ENCODE measurements at regions of chr16 and their contacts with region 1.

Region 1: GRCh38 chr16:19907161-19907992 is 22.7 kb upstream of the GPRC5B start:
- DNase-seq: peak; percentile 76 to 93
- H3K4me3 ChIP-seq: no peak overlapping the region
- H3K27ac ChIP-seq: no peak overlapping the region
- H3K4me1 ChIP-seq: peaks cover 0 to 3% (median 1%) of the 10 kb centered on the region in 4 experiments; a peak in 1 of 7 replicates
- H3K27me3 ChIP-seq: no peaks in the 10 kb centered on the region
- CTCF ChIP-seq: peak; percentile 96 to 99 (median 98)
- EP300 ChIP-seq: 0 out of 3 replicates have a peak, but pooled peaks of 1 of the 2 experiments have one; percentile 25
- POLR2A ChIP-seq: no peak
- RAD21 ChIP-seq: peak; percentile 99 to 100

Region 2: DNA sequence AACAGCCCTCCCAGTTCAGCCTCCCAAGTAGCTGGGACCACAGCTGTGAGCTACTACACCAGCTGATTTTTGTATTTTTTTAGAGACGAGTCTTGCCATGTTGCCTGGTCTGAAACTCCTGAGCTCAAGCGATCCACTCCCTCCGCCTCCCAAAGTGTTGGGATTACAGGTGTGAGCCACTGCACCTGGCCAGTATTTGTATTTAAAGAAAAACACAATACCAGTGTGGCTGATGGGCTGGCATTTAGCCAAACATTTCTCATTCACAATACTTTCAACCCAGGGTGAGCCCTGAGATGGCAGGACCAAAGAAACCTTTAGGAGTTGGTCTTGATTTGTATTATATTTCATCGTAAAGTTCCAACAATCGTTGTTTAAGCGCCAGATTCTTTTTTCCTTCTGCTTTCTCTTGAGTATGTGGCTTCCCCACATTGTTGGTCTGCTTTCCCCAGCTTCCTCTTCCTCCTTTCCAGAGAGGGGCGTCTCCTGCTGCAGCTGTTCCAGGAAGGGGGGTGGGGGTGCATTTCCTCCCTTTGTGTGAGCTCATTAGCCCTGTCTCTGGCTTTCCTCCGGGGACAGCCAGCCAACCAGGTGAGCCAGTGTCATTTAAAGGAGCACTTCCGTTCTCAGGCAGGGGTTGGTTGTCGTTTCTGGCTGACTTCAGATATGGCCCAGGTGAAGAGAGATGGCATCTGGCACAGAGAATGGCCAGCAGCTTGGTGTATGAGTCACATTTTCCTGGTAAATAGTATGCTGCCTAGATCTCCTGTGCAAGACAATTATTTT is 102.6 kb before region 1 on chr16:
- CTCF ChIA-PET with region 1: no interaction called
- POLR2A ChIA-PET with region 1: no interaction called
- DNase-seq: peak; percentile 38 to 55
- H3K4me3 ChIP-seq: no peak overlapping the region
- H3K27ac ChIP-seq: peak overlapping the region; percentile 44; the same call in 1 of the 2 replicates
- H3K4me1 ChIP-seq: peaks cover 0 to 5% (median 1%) of the 10 kb centered on the region in 4 experiments; a peak in 4 of 7 replicates
- H3K27me3 ChIP-seq: no peaks in the 10 kb centered on the region
- CTCF ChIP-seq: no peak
- EP300 ChIP-seq: no peak
- POLR2A ChIP-seq: no peak
- RAD21 ChIP-seq: no peak; a peak in 1 of 4 replicates

Region 3: DNA sequence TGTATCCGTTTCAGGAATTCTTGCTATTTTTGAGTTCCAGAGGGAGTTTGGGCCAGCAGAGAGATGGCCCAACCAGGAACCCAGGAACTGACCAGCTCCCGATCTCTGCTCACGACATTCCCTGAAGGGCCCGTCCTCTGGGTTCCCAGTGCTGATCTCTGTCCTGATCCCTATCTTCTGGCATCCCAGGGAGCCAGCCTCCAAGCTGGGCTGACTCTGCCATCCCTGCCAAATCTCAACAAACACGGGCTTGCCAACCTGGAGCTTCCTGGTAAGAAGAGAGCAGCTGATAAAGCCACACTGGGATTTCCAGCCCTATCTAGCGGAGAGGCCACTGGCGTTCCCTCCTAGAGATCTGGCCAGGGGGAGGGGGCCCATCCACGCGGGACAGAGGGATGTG is 39.0 kb before region 1 on chr16:
- CTCF ChIA-PET with region 1: no interaction called
- POLR2A ChIA-PET with region 1: no interaction called
- DNase-seq: no peak
- H3K4me3 ChIP-seq: no peak overlapping the region
- H3K27ac ChIP-seq: no peak overlapping the region
- H3K4me1 ChIP-seq: peaks cover 0 to 4% (median 0%) of the 10 kb centered on the region in 4 experiments; a peak in 1 of 7 replicates
- H3K27me3 ChIP-seq: no peaks in the 10 kb centered on the region
- CTCF ChIP-seq: no peak
- EP300 ChIP-seq: no peak
- POLR2A ChIP-seq: no peak
- RAD21 ChIP-seq: no peak

Region 4: GRCh38 chr16:19980632-19981265 is 73.4 kb after region 1 on chr16:
- CTCF ChIA-PET with region 1: interaction called, 18 read pairs
- POLR2A ChIA-PET with region 1: no interaction called
- DNase-seq: peak in 1 of 2 experiments; percentile 56
- H3K4me3 ChIP-seq: no peak overlapping the region
- H3K27ac ChIP-seq: no peak overlapping the region
- H3K4me1 ChIP-seq: peaks cover 0 to 4% (median 0%) of the 10 kb centered on the region in 4 experiments; a peak in 3 of 7 replicates
- H3K27me3 ChIP-seq: no peaks in the 10 kb centered on the region
- CTCF ChIP-seq: peak; percentile 68 to 77 (median 75)
- EP300 ChIP-seq: no peak
- POLR2A ChIP-seq: no peak
- RAD21 ChIP-seq: peak; percentile 55 to 71

Region 5: GRCh38 chr16:20064931-20065330 is 157.6 kb after region 1 on chr16:
- CTCF ChIA-PET with region 1: interaction called, 11 read pairs
- POLR2A ChIA-PET with region 1: interaction called, 3 read pairs
- DNase-seq: no peak
- H3K4me3 ChIP-seq: no peak overlapping the region
- H3K27ac ChIP-seq: no peak overlapping the region
- H3K4me1 ChIP-seq: no peaks in the 10 kb centered on the region
- H3K27me3 ChIP-seq: no peaks in the 10 kb centered on the region
- CTCF ChIP-seq: no peak
- EP300 ChIP-seq: no peak
- POLR2A ChIP-seq: no peak
- RAD21 ChIP-seq: no peak

Region 6: DNA sequence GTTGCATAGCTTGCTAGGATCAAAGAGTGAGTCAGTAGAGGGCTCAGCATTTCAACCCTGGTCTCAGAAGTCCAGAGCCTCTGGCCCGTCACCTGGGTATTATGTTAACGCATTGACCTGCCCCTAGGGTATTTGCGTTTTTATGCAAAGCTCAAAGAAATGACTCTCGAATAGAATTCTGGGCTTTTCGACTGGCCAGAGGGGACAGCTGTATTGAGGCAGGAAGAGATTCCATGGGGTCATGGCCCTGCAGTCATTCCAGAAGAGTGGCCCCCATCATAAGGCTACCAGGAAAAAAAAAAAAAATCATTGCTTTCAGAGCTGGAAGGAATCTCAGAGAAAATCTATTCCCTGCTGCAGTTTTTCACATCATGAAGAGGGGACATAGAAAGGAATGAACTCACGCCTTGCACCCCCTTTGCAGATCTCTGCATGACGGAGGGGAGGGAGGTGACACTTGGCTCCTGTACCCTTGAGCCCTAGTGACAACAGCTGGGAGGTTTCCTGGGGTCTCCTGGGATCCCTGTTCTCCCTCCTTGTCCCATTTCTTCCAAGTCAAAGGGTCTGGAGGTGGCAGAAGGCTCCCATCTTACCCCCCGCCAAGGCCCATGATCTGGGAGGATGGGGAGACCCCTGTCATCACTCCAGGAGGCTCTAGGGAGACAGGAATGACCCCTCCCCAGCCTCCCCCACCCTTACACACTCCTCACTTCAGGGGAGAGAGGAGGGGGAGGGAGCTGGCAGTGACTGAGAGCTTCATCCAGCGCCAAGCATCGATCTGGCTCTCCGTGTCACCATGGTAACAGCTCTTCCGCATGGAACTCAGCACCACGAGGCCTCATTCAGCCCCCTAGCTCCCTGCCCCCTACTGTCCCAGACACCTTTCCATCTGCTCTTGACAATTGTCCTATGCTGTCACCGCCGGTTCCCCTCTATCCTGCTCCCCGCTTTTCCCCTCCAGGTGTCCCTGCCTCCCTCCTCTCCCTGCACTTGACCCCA is 384.1 kb after region 1 on chr16:
- CTCF ChIA-PET with region 1: interaction called, 16 read pairs
- POLR2A ChIA-PET with region 1: no interaction called
- DNase-seq: no peak
- H3K4me3 ChIP-seq: no peak overlapping the region
- H3K27ac ChIP-seq: no peak overlapping the region
- H3K4me1 ChIP-seq: peaks cover 0 to 10% (median 4%) of the 10 kb centered on the region in 4 experiments; a peak in 5 of 7 replicates
- H3K27me3 ChIP-seq: no peaks in the 10 kb centered on the region
- CTCF ChIP-seq: no peak
- EP300 ChIP-seq: no peak
- POLR2A ChIP-seq: no peak
- RAD21 ChIP-seq: no peak

Region 7: GRCh38 chr16:20348365-20349185 is 441.2 kb after region 1 on chr16:
- CTCF ChIA-PET with region 1: interaction called, 12 read pairs
- POLR2A ChIA-PET with region 1: no interaction called
- DNase-seq: peak; percentile 39 to 93
- H3K4me3 ChIP-seq: no peak overlapping the region
- H3K27ac ChIP-seq: no peak overlapping the region
- H3K4me1 ChIP-seq: peaks cover 0 to 6% (median 1%) of the 10 kb centered on the region in 4 experiments; a peak in 3 of 7 replicates
- H3K27me3 ChIP-seq: no peaks in the 10 kb centered on the region
- CTCF ChIP-seq: peak; percentile 72 to 92 (median 83)
- EP300 ChIP-seq: no peak
- POLR2A ChIP-seq: no peak
- RAD21 ChIP-seq: peak; percentile 54 to 64

Region 8: GRCh38 chr16:20383106-20384029 is 476.0 kb after region 1 on chr16:
- CTCF ChIA-PET with region 1: interaction called, 78 read pairs
- POLR2A ChIA-PET with region 1: interaction called, 3 read pairs
- DNase-seq: peak; percentile 67 to 82
- H3K4me3 ChIP-seq: no peak overlapping the region
- H3K27ac ChIP-seq: no peak overlapping the region
- H3K4me1 ChIP-seq: peaks cover 0 to 5% (median 2%) of the 10 kb centered on the region in 4 experiments; a peak in 4 of 7 replicates
- H3K27me3 ChIP-seq: no peaks in the 10 kb centered on the region
- CTCF ChIP-seq: peak; percentile 50 to 94 (median 88)
- EP300 ChIP-seq: no peak
- POLR2A ChIP-seq: no peak
- RAD21 ChIP-seq: peak; percentile 92 to 97

Region 9: DNA sequence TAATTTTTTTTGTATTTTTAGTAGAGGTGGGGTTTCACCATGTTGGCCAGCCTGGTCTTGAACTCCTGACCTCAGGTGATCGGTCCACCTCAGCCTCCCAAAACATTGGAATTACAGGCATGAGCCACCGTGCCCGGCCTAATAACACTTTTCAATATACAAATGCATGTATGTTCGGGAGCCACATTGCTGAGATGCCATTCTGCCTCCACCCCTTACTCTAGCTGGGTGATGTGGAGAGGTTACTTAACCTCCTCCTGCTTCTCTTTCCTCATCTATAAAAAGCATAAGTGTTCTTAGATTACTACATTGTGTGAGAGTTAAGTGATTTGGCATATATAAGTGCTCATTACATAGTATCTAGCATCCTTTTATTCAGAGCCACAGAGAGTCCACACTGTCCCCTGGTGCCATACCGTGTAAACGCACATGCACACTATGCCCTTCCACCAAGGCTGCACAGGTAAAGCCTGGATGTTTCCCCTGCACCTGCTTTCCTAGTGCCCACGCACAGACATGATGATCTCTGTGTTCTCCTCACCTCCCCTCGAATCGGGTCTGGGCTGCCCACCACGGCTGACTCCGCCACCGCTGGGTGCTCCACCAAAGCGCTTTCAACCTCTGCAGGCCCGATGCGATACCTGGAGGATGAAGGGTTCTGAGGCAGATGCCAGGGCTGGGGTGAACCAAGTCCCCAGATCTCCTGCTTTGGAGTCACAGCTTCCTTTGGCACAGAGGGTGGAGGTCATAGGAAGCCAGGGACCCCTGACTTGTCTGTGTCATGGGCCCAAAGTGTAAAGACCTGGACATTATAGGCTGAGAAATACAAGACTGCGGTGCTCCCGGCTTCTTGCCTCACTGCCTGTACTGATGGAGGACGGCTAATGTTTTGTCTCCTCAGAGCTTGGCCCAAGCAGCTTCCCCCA is 717.8 kb after region 1 on chr16:
- CTCF ChIA-PET with region 1: no interaction called
- POLR2A ChIA-PET with region 1: no interaction called
- DNase-seq: no peak
- H3K4me3 ChIP-seq: no peak overlapping the region
- H3K27ac ChIP-seq: no peak overlapping the region
- H3K4me1 ChIP-seq: peaks cover 0 to 6% (median 0%) of the 10 kb centered on the region in 4 experiments; a peak in 2 of 7 replicates
- H3K27me3 ChIP-seq: no peaks in the 10 kb centered on the region
- CTCF ChIP-seq: no peak
- EP300 ChIP-seq: no peak
- POLR2A ChIP-seq: no peak
- RAD21 ChIP-seq: no peak

Measured in H1 (cell line).